PC-9 (cell line): ENCODE measurements at regions of chrX and their contacts with region 1.

Region 1: DNA sequence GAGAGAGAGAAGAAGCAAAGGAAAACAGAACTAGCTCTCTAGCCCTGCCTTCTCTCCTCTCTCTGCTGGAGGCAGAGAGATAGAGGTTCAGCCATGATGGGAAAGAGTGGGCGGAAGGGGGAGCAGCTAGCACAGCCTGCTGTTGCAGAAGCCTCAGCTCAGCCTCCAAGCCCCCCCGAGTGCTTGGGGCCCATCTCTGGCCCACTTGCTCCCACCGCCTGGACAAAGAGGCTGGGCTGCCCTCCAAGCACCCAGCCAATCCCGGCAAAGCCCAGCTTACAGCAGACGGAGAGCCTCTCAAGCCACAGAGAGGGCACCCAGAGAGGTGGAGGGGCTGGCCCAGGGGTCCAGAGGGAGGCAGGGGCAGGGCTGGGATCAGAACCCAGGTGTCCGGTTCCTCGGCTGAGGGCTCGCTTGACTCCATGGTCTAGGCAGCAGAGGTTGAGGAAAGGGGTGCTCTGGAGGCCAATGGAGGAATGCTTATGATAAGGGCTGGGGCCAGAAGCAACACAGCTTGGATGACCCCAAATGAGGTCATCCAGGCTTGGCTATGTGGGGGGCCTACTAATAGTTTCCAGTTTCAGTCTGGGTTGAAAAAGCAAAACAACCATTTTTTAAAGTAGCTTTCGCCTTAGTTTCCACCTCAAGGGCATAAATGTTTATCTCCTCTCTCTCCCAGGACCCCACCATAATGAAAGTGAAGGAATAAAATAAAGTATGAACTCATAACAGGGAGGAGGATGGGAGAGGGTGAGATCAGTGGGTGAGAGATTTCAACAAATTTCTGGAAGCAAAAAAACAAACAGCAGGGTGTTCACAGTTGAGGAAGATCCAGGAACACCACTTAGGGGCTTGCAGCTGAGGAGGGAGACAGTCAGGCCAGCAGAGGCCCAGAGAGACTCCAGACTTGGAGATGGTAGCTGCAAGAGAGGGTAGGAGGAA is 24.9 kb upstream of the IQSEC2 start:
- DNase-seq: no peak
- H3K4me3 ChIP-seq: no peak overlapping the region
- H3K27ac ChIP-seq: no peak overlapping the region
- H3K4me1 ChIP-seq: no peaks in the 10 kb centered on the region
- H3K27me3 ChIP-seq: no peaks in the 10 kb centered on the region
- CTCF ChIP-seq: no peak

Region 2: DNA sequence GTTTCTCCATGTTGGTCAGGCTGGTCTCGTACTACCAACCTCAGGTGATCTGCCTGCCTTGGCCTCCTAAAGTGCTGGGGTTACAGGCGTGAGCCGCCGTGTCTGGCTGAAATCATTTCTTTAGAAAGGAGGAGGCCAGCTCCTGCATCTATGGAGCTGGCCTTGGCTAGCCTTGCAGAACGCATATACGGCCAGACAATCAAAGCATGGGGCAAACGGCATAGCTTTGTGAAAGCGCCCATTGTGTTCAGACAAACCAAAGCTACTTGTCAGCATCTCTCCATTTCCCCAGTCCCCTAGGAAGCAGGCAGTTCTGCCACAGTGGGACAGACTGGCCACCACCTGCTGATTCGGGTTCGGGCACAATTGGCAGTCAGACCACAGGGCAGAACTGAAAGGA is 24.1 kb after region 1 on chrX:
- CTCF ChIA-PET with region 1: no interaction called
- POLR2A ChIA-PET with region 1: no interaction called
- intact Hi-C with region 1: no loop called
- DNase-seq: no peak
- H3K4me3 ChIP-seq: no peak overlapping the region
- H3K27ac ChIP-seq: no peak overlapping the region
- H3K4me1 ChIP-seq: no peaks in the 10 kb centered on the region
- H3K27me3 ChIP-seq: no peaks in the 10 kb centered on the region
- CTCF ChIP-seq: no peak

Region 3: GRCh38 chrX:54177306-54177705 is 871.0 kb after region 1 on chrX:
- CTCF ChIA-PET with region 1: interaction called, 12 read pairs
- POLR2A ChIA-PET with region 1: no interaction called
- intact Hi-C with region 1: no loop called
- DNase-seq: no peak
- H3K4me3 ChIP-seq: 0 out of 2 replicates have a peak overlapping the region, but pooled peaks have one; percentile 41
- H3K27ac ChIP-seq: peak overlapping the region; percentile 96
- H3K4me1 ChIP-seq: peaks cover 45% of the 10 kb centered on the region
- H3K27me3 ChIP-seq: no peaks in the 10 kb centered on the region
- CTCF ChIP-seq: no peak